Activated CD8-positive, alpha-beta T cell treated with anti-CD3 and anti-CD28 coated beads for 36 hours (primary cell): ENCODE measurements at regions of chr16 and their contacts with region 1.

Region 1: GRCh38 chr16:84754353-84754856 is 54.6 kb downstream of the USP10 start:
- DNase-seq: peak; percentile 78
- ATAC-seq: peak; percentile 84
- H3K4me3 Mint-ChIP-seq: no peak overlapping the region
- H3K27ac Mint-ChIP-seq: peak overlapping the region; percentile 13
- H3K4me1 Mint-ChIP-seq: peaks cover 83% of the 10 kb centered on the region
- H3K27me3 Mint-ChIP-seq: no peaks in the 10 kb centered on the region
- CTCF ChIP-seq: peak; percentile 89

Region 2: GRCh38 chr16:84633622-84634021 is 120.8 kb before region 1 on chr16:
- CTCF ChIA-PET with region 1: no interaction called
- POLR2A ChIA-PET with region 1: no interaction called
- intact Hi-C with region 1: no loop called
- DNase-seq: no peak
- ATAC-seq: no peak
- H3K4me3 Mint-ChIP-seq: no peak overlapping the region
- H3K27ac Mint-ChIP-seq: no peak overlapping the region
- H3K4me1 Mint-ChIP-seq: peaks cover 31% of the 10 kb centered on the region
- H3K27me3 Mint-ChIP-seq: peaks cover 2% of the 10 kb centered on the region
- CTCF ChIP-seq: no peak

Region 3: DNA sequence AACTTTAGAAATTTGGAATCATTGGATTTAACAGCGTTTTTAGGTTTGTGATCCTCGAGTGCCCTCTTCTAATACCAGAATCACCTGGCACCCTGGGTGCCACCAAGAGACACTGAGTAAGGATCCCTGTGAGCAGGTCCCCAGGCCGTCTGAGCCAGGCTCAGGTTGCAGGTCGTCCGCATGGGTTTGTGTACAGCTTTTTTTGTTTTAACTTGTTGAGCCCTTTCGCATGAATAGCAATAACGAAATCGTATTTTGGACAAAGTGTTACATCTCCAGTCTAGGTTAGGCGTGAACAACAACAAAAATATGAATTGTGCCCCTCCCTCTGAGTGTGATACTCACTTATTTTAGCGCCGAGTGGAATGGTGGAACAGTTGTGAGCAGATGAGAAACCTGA is 43.7 kb before region 1 on chr16:
- CTCF ChIA-PET with region 1: no interaction called
- POLR2A ChIA-PET with region 1: no interaction called
- intact Hi-C with region 1: no loop called
- DNase-seq: no peak
- ATAC-seq: no peak
- H3K4me3 Mint-ChIP-seq: no peak overlapping the region
- H3K27ac Mint-ChIP-seq: no peak overlapping the region
- H3K4me1 Mint-ChIP-seq: peaks cover 64% of the 10 kb centered on the region
- H3K27me3 Mint-ChIP-seq: no peaks in the 10 kb centered on the region
- CTCF ChIP-seq: no peak

Region 4: GRCh38 chr16:84765616-84766580 is 11.5 kb after region 1 on chr16:
- CTCF ChIA-PET with region 1: interaction called, 29 read pairs
- POLR2A ChIA-PET with region 1: interaction called, 5 read pairs
- intact Hi-C with region 1: no loop called
- DNase-seq: no peak
- ATAC-seq: peak; percentile 20
- H3K4me3 Mint-ChIP-seq: no peak overlapping the region
- H3K27ac Mint-ChIP-seq: peak overlapping the region; percentile 53
- H3K4me1 Mint-ChIP-seq: peaks cover 32% of the 10 kb centered on the region
- H3K27me3 Mint-ChIP-seq: no peaks in the 10 kb centered on the region
- CTCF ChIP-seq: no peak

Region 5: GRCh38 chr16:84774810-84775209 is 20.4 kb after region 1 on chr16:
- CTCF ChIA-PET with region 1: interaction called, 26 read pairs
- POLR2A ChIA-PET with region 1: no interaction called
- intact Hi-C with region 1: no loop called
- DNase-seq: no peak
- ATAC-seq: no peak
- H3K4me3 Mint-ChIP-seq: no peak overlapping the region
- H3K27ac Mint-ChIP-seq: no peak overlapping the region
- H3K4me1 Mint-ChIP-seq: no peaks in the 10 kb centered on the region
- H3K27me3 Mint-ChIP-seq: no peaks in the 10 kb centered on the region
- CTCF ChIP-seq: no peak

Region 6: GRCh38 chr16:84819644-84820324 is 65.4 kb after region 1 on chr16 and contains the start of gene CRISPLD2:
- CTCF ChIA-PET with region 1: interaction called, 11 read pairs
- POLR2A ChIA-PET with region 1: no interaction called
- intact Hi-C with region 1: no loop called
- DNase-seq: peak; percentile 90
- ATAC-seq: peak; percentile 99
- H3K4me3 Mint-ChIP-seq: peak within 1 kb of the TSS; percentile 50
- H3K27ac Mint-ChIP-seq: no peak within 1 kb of the TSS
- H3K4me1 Mint-ChIP-seq: peaks cover 9% of the 10 kb centered on the region
- H3K27me3 Mint-ChIP-seq: peaks cover 34% of the 10 kb centered on the region
- CTCF ChIP-seq: no peak
- total RNA-seq, gene CRISPLD2: 0.16 TPM in 1 of 2 experiments, not detected in the other

Region 7: GRCh38 chr16:84925092-84925772 is 170.8 kb after region 1 on chr16:
- CTCF ChIA-PET with region 1: interaction called, 14 read pairs
- POLR2A ChIA-PET with region 1: no interaction called
- intact Hi-C with region 1: no loop called
- DNase-seq: peak; percentile 82
- ATAC-seq: peak; percentile 62
- H3K4me3 Mint-ChIP-seq: no peak overlapping the region
- H3K27ac Mint-ChIP-seq: no peak overlapping the region
- H3K4me1 Mint-ChIP-seq: no peaks in the 10 kb centered on the region
- H3K27me3 Mint-ChIP-seq: peaks cover 3% of the 10 kb centered on the region
- CTCF ChIP-seq: peak; percentile 92

Region 8: DNA sequence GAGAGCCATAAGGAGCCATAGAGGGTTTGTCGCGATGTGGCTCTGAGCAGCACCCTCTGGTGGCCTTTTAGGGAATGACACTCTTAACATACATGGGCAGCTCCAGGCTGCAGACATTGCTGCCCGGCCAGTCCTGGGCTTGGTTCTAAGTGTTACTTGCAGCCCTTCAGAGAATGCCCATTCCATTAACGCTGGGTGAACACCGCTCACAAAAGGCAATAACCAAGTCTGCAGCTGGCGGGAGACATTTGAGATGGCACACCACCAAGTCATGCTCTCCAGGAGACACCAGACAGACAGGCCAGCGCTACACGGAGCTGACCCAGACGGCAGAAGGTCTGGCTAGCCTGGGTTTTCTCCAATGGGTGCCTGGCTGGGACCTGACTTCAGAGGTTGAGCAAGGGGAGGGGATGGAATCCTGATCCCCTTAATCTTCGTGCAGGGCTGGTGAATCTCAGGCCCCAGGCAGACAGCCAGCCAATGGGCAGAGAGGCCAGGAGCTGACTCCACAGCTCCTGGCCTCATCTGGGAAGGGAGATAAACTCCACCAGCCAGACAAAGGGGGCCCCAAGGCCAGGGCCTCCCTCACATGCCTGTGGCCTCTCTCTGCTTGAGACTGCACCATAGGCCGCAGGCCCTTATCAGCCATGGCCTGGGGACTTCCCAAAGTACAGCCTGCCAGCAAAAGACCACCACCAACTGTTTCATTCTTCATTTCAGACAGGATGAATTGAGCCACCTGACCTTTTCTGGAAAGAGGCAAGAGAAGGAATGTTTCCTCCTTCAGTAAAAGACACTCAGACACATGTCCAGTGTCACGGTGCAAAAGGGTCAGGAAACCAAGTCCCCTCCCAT is 198.2 kb after region 1 on chr16:
- CTCF ChIA-PET with region 1: interaction called, 57 read pairs
- POLR2A ChIA-PET with region 1: no interaction called
- intact Hi-C with region 1: loop called (anchors 5 kb)
- DNase-seq: peak; percentile 82
- ATAC-seq: peak; percentile 95
- H3K4me3 Mint-ChIP-seq: no peak overlapping the region
- H3K27ac Mint-ChIP-seq: no peak overlapping the region
- H3K4me1 Mint-ChIP-seq: peaks cover 2% of the 10 kb centered on the region
- H3K27me3 Mint-ChIP-seq: peaks cover 3% of the 10 kb centered on the region
- CTCF ChIP-seq: peak; percentile 84